ENCODE measurements at regions of chr18 and their contacts with region 1.

Region 1: DNA sequence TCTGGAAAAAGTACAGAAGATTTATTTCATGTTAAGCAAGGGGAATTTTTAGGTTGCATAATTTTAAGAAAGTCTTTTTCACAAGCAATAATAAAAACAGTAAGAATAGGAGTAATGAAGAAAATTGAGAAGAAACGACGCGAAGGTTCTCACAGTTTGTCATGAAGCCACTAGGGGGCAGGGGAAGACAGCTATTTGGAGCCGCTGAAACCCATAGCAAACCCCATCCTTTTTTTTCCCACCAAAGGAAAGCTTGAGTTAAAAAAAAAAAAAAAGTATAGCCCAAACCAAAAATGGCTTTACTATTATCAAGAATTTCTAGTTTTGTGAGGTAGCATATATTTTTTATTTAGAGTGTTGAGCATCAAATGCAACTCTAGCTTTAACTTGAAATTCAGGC is 300.9 kb downstream of the PHLPP1 start:
- DNase-seq: peak; percentile 21
- ATAC-seq: peak; percentile 92
- H3K4me3 ChIP-seq: no peak overlapping the region
- H3K27ac ChIP-seq: no peak overlapping the region
- H3K4me1 ChIP-seq: no peaks in the 10 kb centered on the region
- H3K27me3 ChIP-seq: no peaks in the 10 kb centered on the region
- CTCF ChIP-seq: peak; percentile 72 to 88 (median 72)
- EP300 ChIP-seq: no peak
- POLR2A ChIP-seq: no peak
- RAD21 ChIP-seq: peak; percentile 99

Region 2: GRCh38 chr18:63031375-63031774 is 15.1 kb after region 1 on chr18:
- CTCF ChIA-PET with region 1: interaction called, 24 read pairs
- POLR2A ChIA-PET with region 1: no interaction called
- RAD21 ChIA-PET with region 1: interaction called, 6 read pairs
- SMC1A ChIA-PET with region 1: interaction called, 29 read pairs
- in situ Hi-C with region 1: no loop called
- intact Hi-C with region 1: no loop called
- DNase-seq: no peak
- ATAC-seq: no peak
- H3K4me3 ChIP-seq: no peak overlapping the region
- H3K27ac ChIP-seq: no peak overlapping the region
- H3K4me1 ChIP-seq: no peaks in the 10 kb centered on the region
- H3K27me3 ChIP-seq: no peaks in the 10 kb centered on the region
- CTCF ChIP-seq: no peak
- EP300 ChIP-seq: no peak
- POLR2A ChIP-seq: no peak
- RAD21 ChIP-seq: no peak

Region 3: GRCh38 chr18:63074981-63075404 is 58.7 kb after region 1 on chr18:
- CTCF ChIA-PET with region 1: interaction called, 72 read pairs
- POLR2A ChIA-PET with region 1: interaction called, 4 read pairs
- RAD21 ChIA-PET with region 1: interaction called, 26 read pairs
- SMC1A ChIA-PET with region 1: interaction called, 37 read pairs
- in situ Hi-C with region 1: no loop called
- intact Hi-C with region 1: loop called (anchors 1 kb)
- DNase-seq: no peak
- ATAC-seq: peak; percentile 40
- H3K4me3 ChIP-seq: peak overlapping the region; percentile 45; the same call in 1 of the 2 replicates
- H3K27ac ChIP-seq: peak overlapping the region; percentile 60
- H3K4me1 ChIP-seq: peaks cover 17% of the 10 kb centered on the region
- H3K27me3 ChIP-seq: no peaks in the 10 kb centered on the region
- CTCF ChIP-seq: no peak
- EP300 ChIP-seq: no peak
- POLR2A ChIP-seq: peak; percentile 76
- RAD21 ChIP-seq: no peak

Region 4: DNA sequence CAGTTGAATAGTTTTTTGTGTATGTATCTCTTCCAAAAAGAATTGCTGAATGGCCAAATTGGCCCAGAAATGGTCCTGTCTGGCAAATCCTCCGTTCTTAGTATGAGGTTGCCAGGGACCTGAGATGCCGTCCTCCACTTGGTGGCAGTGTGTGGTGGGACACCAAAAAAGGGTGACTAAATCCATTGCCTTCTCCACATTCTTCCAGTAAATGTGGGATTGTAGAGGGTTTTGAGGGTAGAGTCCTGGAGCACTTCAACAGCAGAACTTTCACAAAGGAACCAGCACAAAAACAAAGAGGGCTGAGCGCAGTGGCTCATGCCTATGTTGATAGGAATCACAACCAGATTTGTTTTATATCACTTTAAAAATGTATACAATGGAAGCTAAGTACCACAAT is 103.4 kb after region 1 on chr18:
- CTCF ChIA-PET with region 1: interaction called, 14 read pairs
- POLR2A ChIA-PET with region 1: interaction called, 4 read pairs
- RAD21 ChIA-PET with region 1: interaction called, 7 read pairs
- SMC1A ChIA-PET with region 1: interaction called, 19 read pairs
- in situ Hi-C with region 1: loop called (anchors 5 kb)
- intact Hi-C with region 1: no loop called
- DNase-seq: no peak
- ATAC-seq: peak; percentile 78
- H3K4me3 ChIP-seq: no peak overlapping the region
- H3K27ac ChIP-seq: no peak overlapping the region
- H3K4me1 ChIP-seq: no peaks in the 10 kb centered on the region
- H3K27me3 ChIP-seq: no peaks in the 10 kb centered on the region
- CTCF ChIP-seq: peak; percentile 49 to 65 (median 52); a peak in 5 of 6 replicates
- EP300 ChIP-seq: no peak
- POLR2A ChIP-seq: no peak
- RAD21 ChIP-seq: peak; percentile 70

Region 5: DNA sequence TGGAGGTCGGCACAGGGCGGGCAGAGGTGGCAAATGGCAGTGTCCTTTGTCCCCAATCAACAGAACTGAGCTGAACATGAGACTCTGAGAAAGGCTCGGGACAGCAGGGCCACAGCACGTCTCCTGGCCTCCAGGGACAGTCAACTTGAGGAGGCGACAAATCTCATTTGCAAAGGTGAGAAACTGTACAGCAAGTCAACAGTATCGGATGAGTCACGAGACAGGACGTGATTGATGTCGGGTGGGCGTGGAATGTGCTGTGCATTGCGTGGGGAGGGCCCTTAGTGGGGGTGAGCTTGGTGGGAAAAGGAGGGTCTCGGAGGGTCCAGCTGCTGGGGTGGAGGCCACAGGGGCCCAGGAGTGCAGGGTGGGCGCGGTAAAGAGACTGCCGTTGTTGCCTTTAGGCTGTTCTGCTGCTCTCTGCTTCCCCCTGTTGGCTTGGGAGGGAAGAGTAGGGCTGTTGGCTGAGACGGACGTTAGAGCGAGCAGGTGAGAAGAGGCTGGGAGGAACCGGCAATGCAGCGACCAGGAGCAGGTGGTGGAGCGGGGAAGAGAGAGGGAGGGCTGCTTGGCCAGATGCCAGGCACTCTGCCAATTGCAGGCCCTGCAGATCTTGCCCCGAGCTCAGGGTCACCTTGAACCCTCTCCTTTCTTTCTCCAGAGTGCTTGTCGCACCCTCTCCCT is 139.0 kb after region 1 on chr18:
- CTCF ChIA-PET with region 1: interaction called, 16 read pairs
- POLR2A ChIA-PET with region 1: no interaction called
- RAD21 ChIA-PET with region 1: interaction called, 13 read pairs
- SMC1A ChIA-PET with region 1: interaction called, 18 read pairs
- in situ Hi-C with region 1: no loop called
- intact Hi-C with region 1: loop called (anchors 1 kb)
- DNase-seq: peak; percentile 88
- ATAC-seq: peak; percentile 46
- H3K4me3 ChIP-seq: peak overlapping the region; percentile 76; the same call in 1 of the 2 replicates
- H3K27ac ChIP-seq: peak overlapping the region; percentile 100
- H3K4me1 ChIP-seq: peaks cover 84% of the 10 kb centered on the region
- H3K27me3 ChIP-seq: no peaks in the 10 kb centered on the region
- CTCF ChIP-seq: peak in 2 of 3 experiments; percentile 96 to 98; a peak in 4 of 6 replicates
- EP300 ChIP-seq: peak; percentile 72 to 79; a peak in 3 of 4 replicates
- POLR2A ChIP-seq: peak; percentile 54; the same call in 1 of the 2 replicates
- RAD21 ChIP-seq: peak; percentile 78

Region 6: GRCh38 chr18:63267975-63268721 is 251.9 kb after region 1 on chr18:
- CTCF ChIA-PET with region 1: no interaction called
- POLR2A ChIA-PET with region 1: no interaction called
- RAD21 ChIA-PET with region 1: no interaction called
- SMC1A ChIA-PET with region 1: no interaction called
- in situ Hi-C with region 1: no loop called
- intact Hi-C with region 1: no loop called
- DNase-seq: no peak
- ATAC-seq: peak; percentile 84
- H3K4me3 ChIP-seq: 0 out of 2 replicates have a peak overlapping the region, but pooled peaks have one; percentile 2
- H3K27ac ChIP-seq: peak overlapping the region; percentile 29
- H3K4me1 ChIP-seq: peaks cover 12% of the 10 kb centered on the region
- H3K27me3 ChIP-seq: no peaks in the 10 kb centered on the region
- CTCF ChIP-seq: no peak
- EP300 ChIP-seq: no peak
- POLR2A ChIP-seq: no peak
- RAD21 ChIP-seq: no peak

Region 7: DNA sequence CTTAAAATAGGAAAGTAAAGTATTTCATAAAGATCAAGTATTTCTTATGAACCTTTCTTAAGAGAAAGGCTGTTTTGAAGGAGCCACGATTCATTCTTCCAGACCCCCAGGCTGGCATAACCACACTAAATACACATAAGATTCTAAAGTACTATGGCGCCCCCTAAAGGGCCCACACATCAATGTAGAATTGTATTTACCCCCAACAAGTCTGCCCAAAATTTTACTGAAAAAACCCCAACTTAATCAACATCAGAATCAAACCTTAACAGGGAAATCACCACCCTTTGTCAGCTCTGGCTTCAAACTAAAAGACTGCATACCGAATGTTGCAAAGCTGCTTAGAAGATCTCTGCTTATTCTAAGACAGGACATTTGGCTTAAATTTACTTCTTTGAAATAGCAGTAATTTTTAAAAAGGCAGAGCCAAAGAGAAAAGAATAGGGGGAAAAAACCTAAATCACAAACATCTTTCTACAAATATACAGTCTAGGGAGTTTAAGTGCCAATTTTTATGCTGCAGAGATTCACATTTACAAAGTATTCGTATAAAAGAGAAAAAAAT is 323.7 kb after region 1 on chr18:
- CTCF ChIA-PET with region 1: interaction called, 53 read pairs
- POLR2A ChIA-PET with region 1: no interaction called
- RAD21 ChIA-PET with region 1: interaction called, 31 read pairs
- SMC1A ChIA-PET with region 1: interaction called, 45 read pairs
- in situ Hi-C with region 1: no loop called
- intact Hi-C with region 1: loop called (anchors 5 kb)
- DNase-seq: no peak
- ATAC-seq: peak; percentile 82
- H3K4me3 ChIP-seq: no peak overlapping the region
- H3K27ac ChIP-seq: no peak overlapping the region
- H3K4me1 ChIP-seq: no peaks in the 10 kb centered on the region
- H3K27me3 ChIP-seq: no peaks in the 10 kb centered on the region
- CTCF ChIP-seq: peak; percentile 39 to 59 (median 53)
- EP300 ChIP-seq: no peak
- POLR2A ChIP-seq: no peak
- RAD21 ChIP-seq: peak; percentile 57

Region 8: DNA sequence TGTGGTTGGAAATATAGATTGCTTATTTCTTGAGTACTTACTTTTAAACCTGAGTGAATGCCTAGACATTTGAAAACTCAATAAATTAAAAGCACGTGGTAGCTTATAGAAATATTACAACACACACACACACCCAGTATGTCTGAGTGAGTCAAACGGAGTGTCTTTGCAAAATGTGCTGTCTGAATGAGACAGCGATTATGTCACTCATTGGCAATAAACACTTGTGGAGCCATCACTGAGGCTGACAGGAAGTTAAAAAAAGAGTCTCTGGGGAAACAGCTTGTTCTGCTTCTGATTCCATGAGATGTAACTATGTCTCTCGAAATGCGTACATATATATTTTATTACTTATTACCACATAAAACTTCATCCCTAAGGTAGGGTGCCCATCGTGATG is 428.3 kb after region 1 on chr18:
- CTCF ChIA-PET with region 1: interaction called, 140 read pairs
- POLR2A ChIA-PET with region 1: interaction called, 3 read pairs
- RAD21 ChIA-PET with region 1: interaction called, 39 read pairs
- SMC1A ChIA-PET with region 1: interaction called, 69 read pairs
- in situ Hi-C with region 1: loop called (anchors 5 kb)
- intact Hi-C with region 1: loop called (anchors 1 kb)
- DNase-seq: no peak
- ATAC-seq: peak; percentile 12; the same call in 1 of the 3 replicates
- H3K4me3 ChIP-seq: no peak overlapping the region
- H3K27ac ChIP-seq: no peak overlapping the region
- H3K4me1 ChIP-seq: no peaks in the 10 kb centered on the region
- H3K27me3 ChIP-seq: no peaks in the 10 kb centered on the region
- CTCF ChIP-seq: no peak
- EP300 ChIP-seq: no peak
- POLR2A ChIP-seq: no peak
- RAD21 ChIP-seq: no peak